Left lung (tissue), 14 donors: ENCODE measurements at regions of chr5 and their contacts with region 1.

Region 1: DNA sequence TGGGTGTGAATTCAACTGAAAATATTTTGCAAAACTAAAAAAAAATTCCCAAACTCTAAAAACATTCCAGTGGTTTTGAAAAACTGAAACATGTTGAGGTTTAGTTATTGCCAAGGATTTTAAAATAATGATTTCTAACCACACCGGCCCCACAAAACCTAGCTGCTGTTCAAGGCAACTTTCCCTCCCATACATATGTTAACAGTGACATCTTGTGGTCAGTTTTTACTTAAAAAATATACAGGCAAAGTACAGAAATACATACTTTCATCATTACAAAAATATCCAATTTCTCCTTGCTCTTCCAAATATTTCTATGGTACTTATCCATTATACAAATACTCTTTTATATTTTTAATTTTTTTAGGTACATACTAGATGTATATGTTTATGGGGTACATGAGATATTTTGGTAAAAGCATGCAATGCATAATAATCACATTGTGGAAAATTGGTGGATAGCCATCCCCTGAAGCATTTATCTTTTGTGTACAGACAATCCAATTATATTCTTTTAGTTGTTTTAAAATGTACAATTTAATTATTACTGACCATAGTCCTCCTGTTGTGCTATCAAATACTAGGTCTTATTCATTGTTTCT is 34.4 kb upstream of the MRPS30 start:
- DNase-seq: peak in 2 of 4 donors; percentile 41 to 70
- ATAC-seq: peak; percentile 78
- H3K4me3 ChIP-seq: no peak overlapping the region
- H3K27ac ChIP-seq: no peak overlapping the region
- H3K4me1 ChIP-seq: no peaks in the 10 kb centered on the region
- H3K27me3 ChIP-seq: no peaks in the 10 kb centered on the region
- CTCF ChIP-seq: peak in 1 of 2 donors; percentile 31

Region 2: GRCh38 chr5:44546283-44546682 is 228.1 kb before region 1 on chr5:
- intact Hi-C with region 1: loop called in 1 of 2 experiments (anchors 10 kb)
- DNase-seq: no peak
- ATAC-seq: peak; percentile 50
- H3K4me3 ChIP-seq: no peak overlapping the region
- H3K27ac ChIP-seq: no peak overlapping the region
- H3K4me1 ChIP-seq: no peaks in the 10 kb centered on the region
- H3K27me3 ChIP-seq: no peaks in the 10 kb centered on the region
- CTCF ChIP-seq: no peak